Activated CD4-positive, alpha-beta T cell treated with anti-CD3 and anti-CD28 coated beads, Interleukin-2, amount 10 ng/mL, durations not matched to agents 24 days and 14 days (primary cell): ENCODE measurements at regions of chr6 and their contacts with region 1.

Region 1: DNA sequence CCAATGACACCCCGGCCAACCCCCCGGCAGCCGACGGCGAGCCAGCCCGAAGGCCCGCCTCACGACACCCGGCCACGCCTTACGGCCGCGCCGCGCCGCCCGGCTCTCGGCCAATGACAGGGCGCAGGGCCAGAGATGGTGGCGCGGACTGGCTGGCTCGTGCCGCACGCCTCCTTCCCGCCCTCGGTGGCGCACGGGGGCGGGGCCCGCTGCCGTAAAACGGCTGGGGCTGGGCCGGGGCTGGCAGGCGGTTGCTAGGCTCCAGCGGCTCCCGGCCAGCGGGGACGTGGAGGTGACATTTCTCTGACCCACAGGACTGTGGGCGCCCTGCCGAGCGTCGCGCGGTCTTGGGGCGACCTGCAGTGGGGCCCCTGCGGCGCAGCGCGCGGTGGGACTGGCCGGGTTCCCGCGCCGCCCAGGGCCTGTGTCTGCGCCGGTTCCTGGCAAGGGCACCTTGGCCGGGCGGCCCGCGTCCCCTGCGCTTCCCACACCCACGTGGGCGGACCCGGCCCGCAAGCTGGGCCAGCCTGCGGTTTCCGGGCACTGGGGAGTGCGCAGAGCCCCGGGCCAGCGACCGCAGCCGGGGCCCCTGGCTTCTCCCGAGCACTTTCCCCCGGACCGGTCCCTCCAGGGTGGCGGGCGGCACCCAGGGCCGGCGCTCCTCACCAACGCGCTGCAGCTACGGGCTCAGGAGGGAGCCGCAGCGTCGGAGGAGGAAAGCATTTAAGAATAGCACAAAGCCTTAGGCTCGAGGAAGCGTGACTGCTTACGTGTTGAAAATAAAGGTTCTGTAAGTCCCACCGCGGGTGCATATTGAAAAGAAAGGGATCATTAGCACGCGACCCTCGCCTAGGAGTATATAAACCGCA is at the start of gene MPC1:
- DNase-seq: peak; percentile 99
- H3K4me3 Mint-ChIP-seq: peak within 1 kb of the TSS; percentile 88
- H3K27ac Mint-ChIP-seq: peak within 1 kb of the TSS; percentile 75
- H3K4me1 Mint-ChIP-seq: peaks cover 13% of the 10 kb centered on the region
- H3K27me3 Mint-ChIP-seq: peaks cover 5% of the 10 kb centered on the region
- total RNA-seq, gene MPC1: 17.1 and 18.1 TPM in 2 replicates

Region 2: GRCh38 chr6:166308033-166308768 is 75.0 kb before region 1 on chr6 and contains the start of gene PRR18:
- intact Hi-C with region 1: loop called (anchors 2 kb)
- DNase-seq: no peak
- H3K4me3 Mint-ChIP-seq: no peak within 1 kb of the TSS
- H3K27ac Mint-ChIP-seq: no peak within 1 kb of the TSS
- H3K4me1 Mint-ChIP-seq: no peaks in the 10 kb centered on the region
- H3K27me3 Mint-ChIP-seq: peaks cover 57% of the 10 kb centered on the region
- total RNA-seq, gene PRR18: not detected in 2 replicates

Region 3: GRCh38 chr6:166342349-166343149 is 40.6 kb before region 1 on chr6 and contains the start of gene SFT2D1:
- intact Hi-C with region 1: loop called (anchors 1 kb)
- DNase-seq: peak; percentile 96
- H3K4me3 Mint-ChIP-seq: peak within 1 kb of the TSS; percentile 99
- H3K27ac Mint-ChIP-seq: peak within 1 kb of the TSS; percentile 93
- H3K4me1 Mint-ChIP-seq: peaks cover 8% of the 10 kb centered on the region
- H3K27me3 Mint-ChIP-seq: peaks cover 4% of the 10 kb centered on the region
- total RNA-seq, gene SFT2D1: 56.9 and 61.2 TPM in 2 replicates

Region 4: DNA sequence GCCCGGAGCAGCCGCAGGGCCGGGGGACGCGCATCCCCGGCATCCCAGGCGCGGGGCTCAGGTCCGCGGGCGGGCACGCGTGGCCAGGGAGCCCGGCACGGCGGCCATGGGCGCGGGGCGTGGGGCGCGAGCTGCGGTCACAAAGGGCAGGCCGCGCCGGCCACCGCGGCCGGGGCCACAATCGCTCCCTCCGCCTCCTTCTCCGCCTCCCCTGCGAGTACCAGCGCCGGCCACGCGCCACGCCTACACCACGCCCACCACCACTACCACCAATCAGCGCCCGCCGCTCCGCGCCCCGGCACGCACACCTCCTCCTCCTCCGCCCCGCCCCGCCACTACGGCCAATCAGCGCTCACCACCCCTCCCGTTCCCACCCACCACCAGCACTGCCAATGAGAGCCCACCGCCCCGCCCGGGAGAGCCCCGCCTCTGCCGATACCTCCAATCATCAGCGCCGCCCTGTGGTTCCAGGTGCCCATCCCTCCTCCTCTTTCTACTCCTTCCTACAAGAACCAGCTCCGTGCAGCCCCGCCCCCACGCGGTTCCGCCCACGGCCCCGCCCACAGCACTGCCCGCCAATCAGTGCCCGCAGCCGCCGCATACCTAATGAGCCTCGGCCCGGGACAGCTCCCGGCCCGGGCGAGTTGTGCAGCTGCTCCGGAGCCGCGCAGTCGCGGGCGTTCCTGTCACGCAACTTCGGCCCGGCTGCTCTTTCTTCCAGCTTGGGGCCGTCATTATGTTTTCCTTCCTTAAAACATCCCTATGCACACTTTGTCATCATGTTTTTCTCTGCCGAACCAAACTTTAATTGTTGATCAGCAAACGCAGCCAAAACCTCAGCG is 244.1 kb after region 1 on chr6 and contains the start of gene RPS6KA2:
- intact Hi-C with region 1: loop called (anchors 1 kb)
- DNase-seq: peak; percentile 100
- H3K4me3 Mint-ChIP-seq: peak within 1 kb of the TSS; percentile 91
- H3K27ac Mint-ChIP-seq: peak within 1 kb of the TSS; percentile 83
- H3K4me1 Mint-ChIP-seq: peaks cover 17% of the 10 kb centered on the region
- H3K27me3 Mint-ChIP-seq: peaks cover 46% of the 10 kb centered on the region
- total RNA-seq, gene RPS6KA2: 2.8 and 3.1 TPM in 2 replicates

Region 5: GRCh38 chr6:166999145-166999883 is 616.1 kb after region 1 on chr6 and contains the start of gene CEP43:
- intact Hi-C with region 1: loop called (anchors 2 kb)
- DNase-seq: peak; percentile 97
- H3K4me3 Mint-ChIP-seq: peak within 1 kb of the TSS; percentile 75
- H3K27ac Mint-ChIP-seq: peak within 1 kb of the TSS; percentile 85
- H3K4me1 Mint-ChIP-seq: peaks cover 33% of the 10 kb centered on the region
- H3K27me3 Mint-ChIP-seq: no peaks in the 10 kb centered on the region
- total RNA-seq, gene CEP43: 21.1 and 23.0 TPM in 2 replicates